Breast epithelium (tissue), 4 donors: ENCODE measurements at regions of chr19 and their contacts with region 1.

Region 1: DNA sequence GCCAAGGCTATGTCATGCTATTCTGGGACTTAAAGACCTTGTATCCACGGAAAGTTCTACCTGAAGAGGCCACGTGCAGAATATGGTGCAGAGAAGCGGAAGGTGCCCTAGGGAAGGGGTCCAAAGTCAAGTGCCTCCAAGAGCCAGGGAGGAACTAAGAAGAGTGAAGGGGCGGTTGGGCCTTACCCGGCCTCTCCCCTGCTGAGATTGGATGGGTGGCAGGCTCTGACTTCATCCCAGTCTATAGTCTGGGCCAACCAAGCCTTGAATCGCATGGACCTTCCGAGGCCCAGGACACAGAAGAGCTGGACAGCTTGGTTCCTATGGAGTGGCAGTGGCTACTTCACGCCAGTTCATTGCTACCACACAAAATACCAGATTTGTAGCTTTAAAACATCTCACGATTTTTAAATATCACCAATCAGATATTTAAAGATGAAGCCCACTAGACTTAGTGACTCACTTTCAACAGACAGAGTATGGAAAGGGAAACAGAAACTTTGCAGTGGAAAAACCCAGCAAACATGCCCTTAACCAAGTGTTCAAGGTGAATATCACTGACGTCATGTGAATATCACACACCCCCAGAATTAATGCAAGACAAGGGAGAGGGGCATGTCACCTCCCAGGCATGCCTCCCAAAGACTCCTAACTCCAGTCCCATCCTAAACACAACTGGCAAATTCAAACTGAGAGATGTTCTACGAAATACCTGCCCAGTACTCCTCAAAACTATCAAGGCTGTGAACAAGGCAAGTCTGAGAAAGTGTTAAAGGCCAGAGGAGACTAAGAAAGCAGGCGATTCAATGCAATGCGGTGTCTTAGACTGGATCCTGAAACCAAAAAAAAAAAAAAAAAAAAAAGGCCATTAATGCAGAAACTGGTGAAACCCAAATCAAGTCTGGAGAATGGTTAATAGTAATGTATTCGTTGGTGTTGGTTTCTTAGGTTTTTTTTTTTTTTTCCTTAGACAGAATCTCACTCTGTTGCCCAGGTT is 10.2 kb downstream of the C19orf12 start:
- DNase-seq: no peak
- H3K4me3 ChIP-seq: no peak overlapping the region
- H3K27ac ChIP-seq: no peak overlapping the region
- H3K4me1 ChIP-seq: no peaks in the 10 kb centered on the region
- H3K27me3 ChIP-seq: no peaks in the 10 kb centered on the region
- CTCF ChIP-seq: no peak
- POLR2A ChIP-seq: no peak

Region 2: GRCh38 chr19:29731331-29731850 is 26.5 kb after region 1 on chr19:
- intact Hi-C with region 1: loop called (anchors 2 kb)
- DNase-seq: no peak
- H3K4me3 ChIP-seq: no peak overlapping the region
- H3K27ac ChIP-seq: no peak overlapping the region
- H3K4me1 ChIP-seq: no peaks in the 10 kb centered on the region
- H3K27me3 ChIP-seq: peaks cover 0 to 48% of the 10 kb centered on the region in 2 donors
- CTCF ChIP-seq: no peak
- POLR2A ChIP-seq: no peak